Left colon (tissue), 2 donors: ENCODE measurements at regions of chr4 and their contacts with region 1.

Region 1: GRCh38 chr4:181147416-181147951 is 1095.7 kb upstream of the TENM3 start:
- DNase-seq: no peak
- ATAC-seq: no peak

Region 2: DNA sequence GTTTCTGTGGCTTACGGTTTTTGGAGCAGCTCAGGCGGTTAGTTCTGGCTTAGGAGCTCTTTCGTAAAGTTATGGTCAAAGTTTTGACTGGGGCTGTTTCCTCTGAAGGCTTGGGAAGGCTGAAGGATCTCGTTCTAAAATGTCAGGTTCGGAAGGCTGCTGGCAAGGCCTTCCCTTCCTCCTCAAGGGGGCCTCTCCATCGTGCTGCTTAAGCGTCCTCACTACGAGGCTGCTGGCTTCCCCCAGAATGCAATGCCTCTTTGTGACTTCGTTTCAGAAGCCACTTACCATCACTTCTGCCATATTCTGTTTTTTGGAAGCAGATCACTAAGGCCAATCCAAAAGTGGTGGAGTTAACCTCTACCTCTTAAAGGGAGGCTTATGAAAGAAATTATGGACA is 100.7 kb before region 1 on chr4:
- intact Hi-C with region 1: no loop called
- DNase-seq: no peak
- ATAC-seq: no peak

Region 3: GRCh38 chr4:181528570-181529184 is 381.2 kb after region 1 on chr4:
- intact Hi-C with region 1: loop called in 1 of 2 experiments (anchors 5 kb)
- DNase-seq: peak; percentile 61 to 81
- ATAC-seq: peak; percentile 100